Mammary epithelial cell (primary cell): ENCODE measurements at regions of chr10 and their contacts with region 1.

Region 1: GRCh38 chr10:60816628-60817397 is 38.5 kb downstream of the CDK1 start:
- DNase-seq: peak; percentile 46
- H3K4me3 ChIP-seq: no peak overlapping the region
- H3K27ac ChIP-seq: no peak overlapping the region
- H3K4me1 ChIP-seq: no peaks in the 10 kb centered on the region
- H3K27me3 ChIP-seq: no peaks in the 10 kb centered on the region
- CTCF ChIP-seq: peak; percentile 78 to 83

Region 2: GRCh38 chr10:60964257-60965235 is 147.7 kb after region 1 on chr10:
- CTCF ChIA-PET with region 1: interaction called, 7 read pairs
- dilution Hi-C with region 1: no loop called
- in situ Hi-C with region 1: loop called in 1 of 2 experiments (anchors 25 kb)
- intact Hi-C with region 1: loop called (anchors 1 kb)
- DNase-seq: peak; percentile 82
- H3K4me3 ChIP-seq: peak overlapping the region in 1 of 3 experiments; percentile 26
- H3K27ac ChIP-seq: peak overlapping the region; percentile 86
- H3K4me1 ChIP-seq: peaks cover 26% of the 10 kb centered on the region
- H3K27me3 ChIP-seq: no peaks in the 10 kb centered on the region
- CTCF ChIP-seq: peak; percentile 73 to 87

Region 3: DNA sequence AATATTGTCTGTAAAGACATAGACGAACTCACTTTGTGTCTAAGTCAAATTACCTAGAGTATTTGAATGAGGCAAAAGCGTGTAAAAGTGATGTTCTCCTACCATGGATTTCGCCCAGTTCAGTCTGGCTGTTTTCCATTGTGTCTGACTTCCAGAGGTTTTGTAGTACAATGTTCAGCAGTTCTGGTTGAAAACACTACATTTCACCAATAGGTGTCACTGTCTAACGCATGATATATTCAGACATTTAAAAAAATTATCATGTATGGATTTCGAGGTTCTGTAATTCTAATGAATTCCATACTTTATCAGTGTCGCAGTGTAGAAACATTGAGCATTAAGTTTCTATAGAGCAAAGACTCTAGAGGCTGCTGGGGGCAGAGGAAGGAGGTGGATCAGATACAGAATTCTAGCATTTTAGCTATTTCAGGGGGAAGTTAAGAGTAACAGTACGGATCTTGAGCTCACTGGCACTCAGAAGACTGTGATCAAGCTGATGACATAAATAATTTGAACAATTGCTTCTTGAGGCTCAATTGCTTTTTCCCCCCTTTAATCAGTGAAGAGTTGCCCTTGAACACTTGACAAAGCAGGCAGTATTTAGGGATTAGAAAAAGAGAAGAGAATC is 324.1 kb after region 1 on chr10:
- CTCF ChIA-PET with region 1: interaction called, 11 read pairs
- dilution Hi-C with region 1: no loop called
- in situ Hi-C with region 1: no loop called
- intact Hi-C with region 1: loop called (anchors 2 kb)
- DNase-seq: peak; percentile 41
- H3K4me3 ChIP-seq: no peak overlapping the region
- H3K27ac ChIP-seq: no peak overlapping the region
- H3K4me1 ChIP-seq: no peaks in the 10 kb centered on the region
- H3K27me3 ChIP-seq: no peaks in the 10 kb centered on the region
- CTCF ChIP-seq: peak; percentile 59 to 61

Region 4: GRCh38 chr10:61189912-61190311 is 373.1 kb after region 1 on chr10:
- CTCF ChIA-PET with region 1: no interaction called
- dilution Hi-C with region 1: no loop called
- in situ Hi-C with region 1: no loop called
- intact Hi-C with region 1: loop called (anchors 1 kb)
- DNase-seq: no peak
- H3K4me3 ChIP-seq: no peak overlapping the region
- H3K27ac ChIP-seq: no peak overlapping the region
- H3K4me1 ChIP-seq: no peaks in the 10 kb centered on the region
- H3K27me3 ChIP-seq: no peaks in the 10 kb centered on the region
- CTCF ChIP-seq: no peak

Region 5: GRCh38 chr10:61284222-61284890 is 467.5 kb after region 1 on chr10:
- CTCF ChIA-PET with region 1: no interaction called
- dilution Hi-C with region 1: no loop called
- in situ Hi-C with region 1: loop called (anchors 10 to 25 kb)
- intact Hi-C with region 1: loop called (anchors 1 kb)
- DNase-seq: peak; percentile 22
- H3K4me3 ChIP-seq: no peak overlapping the region
- H3K27ac ChIP-seq: no peak overlapping the region
- H3K4me1 ChIP-seq: no peaks in the 10 kb centered on the region
- H3K27me3 ChIP-seq: no peaks in the 10 kb centered on the region
- CTCF ChIP-seq: peak; percentile 66 to 70

Region 6: DNA sequence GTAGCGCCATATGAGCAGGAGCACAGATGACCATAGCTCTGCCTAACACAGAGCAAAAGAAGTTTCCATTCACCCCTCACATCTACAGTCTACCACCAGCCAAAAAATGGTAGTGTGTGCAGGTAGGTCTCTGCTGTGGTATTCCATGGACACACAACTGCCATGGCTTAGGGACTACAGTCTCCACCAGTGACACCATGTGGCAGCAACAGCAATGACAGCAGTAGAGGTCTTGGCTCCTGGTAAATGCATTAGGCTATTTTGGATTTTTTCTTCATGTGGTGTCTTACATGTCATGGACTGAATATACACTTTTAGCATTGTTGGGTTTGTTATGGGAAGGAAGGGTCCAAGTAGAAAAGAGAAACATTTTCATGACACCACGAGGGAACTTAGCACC is 775.8 kb after region 1 on chr10:
- CTCF ChIA-PET with region 1: no interaction called
- dilution Hi-C with region 1: no loop called
- in situ Hi-C with region 1: no loop called
- intact Hi-C with region 1: loop called (anchors 10 kb)
- DNase-seq: peak; percentile 6
- H3K4me3 ChIP-seq: no peak overlapping the region
- H3K27ac ChIP-seq: no peak overlapping the region
- H3K4me1 ChIP-seq: no peaks in the 10 kb centered on the region
- H3K27me3 ChIP-seq: no peaks in the 10 kb centered on the region
- CTCF ChIP-seq: peak; percentile 47 to 53

Region 7: DNA sequence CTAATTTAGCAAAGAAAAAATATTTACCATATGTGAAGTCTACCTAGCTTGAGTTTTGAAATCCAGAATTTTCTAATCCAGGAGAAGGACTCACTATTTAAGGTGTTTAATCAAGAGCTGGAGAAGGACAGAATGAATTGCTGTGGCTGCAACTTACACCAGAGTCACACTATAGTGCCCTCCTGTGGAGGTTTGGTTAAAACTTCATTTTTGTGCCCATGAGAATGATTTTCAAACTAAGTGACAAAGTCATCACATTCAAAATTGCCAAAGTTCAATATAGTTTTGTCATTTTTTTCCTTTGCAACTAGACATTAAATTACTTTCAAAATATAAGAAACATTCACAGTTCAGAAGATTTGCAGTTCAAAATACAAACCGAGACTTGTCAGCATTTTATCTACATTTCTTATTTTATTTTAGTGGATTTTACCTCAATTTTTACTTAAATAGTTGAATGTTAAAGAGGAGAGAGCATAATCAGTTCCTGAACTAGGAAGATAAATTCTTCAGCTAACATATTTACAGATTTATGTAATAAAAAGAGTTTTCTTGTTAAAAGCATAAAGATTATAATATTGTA is 916.6 kb after region 1 on chr10:
- CTCF ChIA-PET with region 1: no interaction called
- dilution Hi-C with region 1: no loop called
- in situ Hi-C with region 1: loop called in 1 of 2 experiments (anchors 25 kb)
- intact Hi-C with region 1: loop called (anchors 2 kb)
- DNase-seq: peak; percentile 19
- H3K4me3 ChIP-seq: no peak overlapping the region
- H3K27ac ChIP-seq: no peak overlapping the region
- H3K4me1 ChIP-seq: no peaks in the 10 kb centered on the region
- H3K27me3 ChIP-seq: peaks cover 2% of the 10 kb centered on the region
- CTCF ChIP-seq: peak; percentile 55 to 65